ENCODE measurements at regions of chr22 and their contacts with region 1.

Region 1: DNA sequence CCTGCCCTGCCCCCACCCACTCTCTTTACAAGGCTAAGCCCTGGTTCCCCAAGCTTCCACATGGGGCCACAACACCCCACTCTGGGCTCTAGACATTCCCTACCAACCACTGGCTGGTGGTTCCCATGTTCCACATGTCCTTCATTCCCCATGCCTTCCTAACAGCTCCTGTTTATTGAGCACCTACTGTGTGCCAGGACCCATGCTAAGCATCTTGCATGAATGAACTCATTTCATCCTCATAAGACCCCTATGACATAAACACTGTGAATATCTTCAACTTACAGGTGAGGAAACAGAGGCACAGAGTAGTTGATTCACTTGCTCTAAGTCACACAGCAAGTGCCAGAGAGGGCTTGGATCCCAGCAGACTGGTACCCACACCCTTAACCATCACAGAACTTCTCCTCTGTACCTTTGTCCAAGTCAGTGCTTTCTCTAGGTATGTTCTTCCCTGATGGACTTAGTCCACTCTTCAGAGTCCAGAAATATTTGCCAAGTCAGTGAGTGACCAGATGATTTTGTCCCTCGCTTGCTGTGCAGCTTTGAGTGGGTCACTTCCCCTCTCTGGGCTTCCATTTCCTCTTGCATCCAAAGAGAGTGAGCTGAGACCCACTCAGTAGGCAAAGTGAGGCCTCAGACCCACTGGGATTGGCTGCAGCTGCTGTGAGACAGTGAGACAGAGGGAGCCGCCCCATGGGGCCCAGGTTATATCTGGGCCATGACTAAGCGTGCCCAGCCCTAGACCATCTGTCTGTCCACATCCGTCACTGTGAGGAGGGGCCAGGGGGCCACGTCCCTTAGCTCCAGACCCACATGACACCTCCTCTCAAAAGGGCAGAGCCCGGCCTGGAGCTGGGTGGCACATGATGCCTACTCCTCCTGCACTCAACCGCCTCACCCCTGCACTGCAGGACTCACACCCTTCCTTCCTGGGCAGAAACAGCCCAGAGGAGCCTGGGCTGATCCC is 132.4 kb downstream of the MN1 start:
- DNase-seq: peak; percentile 78 to 87
- ATAC-seq: peak; percentile 80 to 97 (median 92)
- H3K4me3 ChIP-seq: no peak overlapping the region
- H3K27ac ChIP-seq: peak overlapping the region; percentile 69 to 92 (median 80)
- H3K4me1 ChIP-seq: peaks cover 20 to 51% (median 35%) of the 10 kb centered on the region in 9 donors
- H3K27me3 ChIP-seq: no peaks in the 10 kb centered on the region
- CTCF ChIP-seq: no peak

Region 2: DNA sequence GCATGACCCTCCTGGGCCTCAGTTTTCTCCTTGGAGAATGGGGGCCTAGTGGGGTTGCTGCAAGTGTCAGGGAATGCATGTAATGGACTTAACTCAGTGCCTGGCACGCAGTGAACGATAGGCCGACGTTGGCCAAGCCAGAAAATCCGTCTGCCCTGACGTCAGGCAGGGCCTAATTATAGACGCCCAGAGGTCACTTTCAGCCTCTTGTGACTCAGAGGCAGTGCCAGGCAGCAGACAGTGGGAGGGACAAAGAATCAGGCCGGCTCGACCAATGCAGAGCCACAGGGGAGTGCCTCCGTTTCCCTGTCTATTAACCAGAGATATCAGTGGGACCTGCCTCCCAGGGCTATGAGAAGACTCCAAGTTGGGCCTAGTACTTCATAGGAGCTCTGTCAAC is 17.4 kb after region 1 on chr22:
- intact Hi-C with region 1: loop called in 2 of 10 experiments (anchors 1 to 2 kb)
- DNase-seq: peak; percentile 78 to 89
- ATAC-seq: peak; percentile 91 to 97 (median 96)
- H3K4me3 ChIP-seq: no peak overlapping the region
- H3K27ac ChIP-seq: peak overlapping the region; percentile 79 to 93 (median 84)
- H3K4me1 ChIP-seq: peaks cover 2 to 27% (median 22%) of the 10 kb centered on the region in 9 donors
- H3K27me3 ChIP-seq: no peaks in the 10 kb centered on the region
- CTCF ChIP-seq: no peak

Region 3: GRCh38 chr22:27718186-27719032 is 49.3 kb after region 1 on chr22:
- intact Hi-C with region 1: loop called in 2 of 10 experiments (anchors 5 kb)
- DNase-seq: peak; percentile 66 to 79
- ATAC-seq: peak; percentile 85 to 97 (median 94)
- H3K4me3 ChIP-seq: peak overlapping the region in 2 of 10 donors; percentile 1 to 6
- H3K27ac ChIP-seq: peak overlapping the region; percentile 2 to 84 (median 60)
- H3K4me1 ChIP-seq: peaks cover 3 to 30% (median 18%) of the 10 kb centered on the region in 9 donors
- H3K27me3 ChIP-seq: peaks cover 0 to 11% (median 0%) of the 10 kb centered on the region in 7 donors
- CTCF ChIP-seq: no peak

Region 4: GRCh38 chr22:27726697-27727449 is 57.8 kb after region 1 on chr22:
- intact Hi-C with region 1: loop called in 3 of 10 experiments (anchors 1 to 2 kb)
- DNase-seq: peak; percentile 70 to 79
- ATAC-seq: peak; percentile 80 to 96 (median 94)
- H3K4me3 ChIP-seq: peak overlapping the region in 3 of 10 donors; percentile 8 to 12 (median 8)
- H3K27ac ChIP-seq: peak overlapping the region; percentile 70 to 92 (median 90)
- H3K4me1 ChIP-seq: peaks cover 4 to 35% (median 20%) of the 10 kb centered on the region in 9 donors
- H3K27me3 ChIP-seq: no peaks in the 10 kb centered on the region
- CTCF ChIP-seq: peak in 1 of 9 donors; percentile 6

Region 5: GRCh38 chr22:27780161-27780575 is 111.1 kb after region 1 on chr22:
- intact Hi-C with region 1: loop called in 2 of 10 experiments (anchors 10 kb)
- DNase-seq: peak in 1 of 2 donors; percentile 35
- ATAC-seq: peak in 6 of 8 donors; percentile 39 to 71 (median 50)
- H3K4me3 ChIP-seq: no peak overlapping the region
- H3K27ac ChIP-seq: peak overlapping the region in 9 of 10 donors; percentile 20 to 80 (median 58)
- H3K4me1 ChIP-seq: peaks cover 17 to 91% (median 36%) of the 10 kb centered on the region in 9 donors
- H3K27me3 ChIP-seq: peaks cover 0 to 9% (median 0%) of the 10 kb centered on the region in 7 donors
- CTCF ChIP-seq: no peak

Region 6: GRCh38 chr22:27799334-27800249 is 130.5 kb after region 1 on chr22:
- intact Hi-C with region 1: loop called in 1 of 10 experiments (anchors 10 kb)
- DNase-seq: peak in 1 of 2 donors; percentile 57
- ATAC-seq: peak in 2 of 8 donors; percentile 7 to 14
- H3K4me3 ChIP-seq: peak overlapping the region; percentile 57 to 93 (median 73)
- H3K27ac ChIP-seq: peak overlapping the region; percentile 77 to 95 (median 87)
- H3K4me1 ChIP-seq: peaks cover 3 to 59% (median 36%) of the 10 kb centered on the region in 9 donors
- H3K27me3 ChIP-seq: peaks cover 0 to 79% (median 15%) of the 10 kb centered on the region in 7 donors
- CTCF ChIP-seq: no peak